Activated T-helper 2 cell treated with anti-CD3 and anti-CD28 coated beads, Interferon-gamma antibody, Interleukin-2, Interleukin-4, amounts not matched to agents 10 μg/mL and 5 μg/mL and 100 μg/mL, durations not matched to agents 14 hours and 24 hours and 36 hours (primary cell): ENCODE measurements at regions of chr5 and their contacts with region 1.

Region 1: DNA sequence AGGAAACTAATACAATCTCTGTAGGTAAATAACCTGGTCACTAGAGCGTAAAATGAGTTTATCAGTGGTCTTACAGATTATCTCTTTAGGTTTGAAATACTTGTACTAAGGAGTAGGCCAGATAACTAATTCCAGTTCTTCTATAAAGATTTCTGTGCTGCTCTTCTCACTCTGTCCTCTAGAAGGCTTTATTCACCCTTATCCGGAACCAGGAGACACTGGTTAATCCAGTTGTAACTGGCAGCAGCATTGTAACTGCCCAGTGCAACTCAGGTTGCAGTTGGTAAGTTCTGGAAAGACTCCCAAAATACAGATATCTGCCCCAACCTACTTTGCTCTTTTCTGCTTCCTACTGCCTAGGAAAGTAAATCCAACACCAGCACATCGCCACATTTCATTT is 19.8 kb downstream of the C5orf22 start:
- DNase-seq: no peak
- H3K4me3 Mint-ChIP-seq: no peak overlapping the region
- H3K27ac Mint-ChIP-seq: no peak overlapping the region
- H3K4me1 Mint-ChIP-seq: peaks cover 14% of the 10 kb centered on the region
- H3K27me3 Mint-ChIP-seq: no peaks in the 10 kb centered on the region

Region 2: DNA sequence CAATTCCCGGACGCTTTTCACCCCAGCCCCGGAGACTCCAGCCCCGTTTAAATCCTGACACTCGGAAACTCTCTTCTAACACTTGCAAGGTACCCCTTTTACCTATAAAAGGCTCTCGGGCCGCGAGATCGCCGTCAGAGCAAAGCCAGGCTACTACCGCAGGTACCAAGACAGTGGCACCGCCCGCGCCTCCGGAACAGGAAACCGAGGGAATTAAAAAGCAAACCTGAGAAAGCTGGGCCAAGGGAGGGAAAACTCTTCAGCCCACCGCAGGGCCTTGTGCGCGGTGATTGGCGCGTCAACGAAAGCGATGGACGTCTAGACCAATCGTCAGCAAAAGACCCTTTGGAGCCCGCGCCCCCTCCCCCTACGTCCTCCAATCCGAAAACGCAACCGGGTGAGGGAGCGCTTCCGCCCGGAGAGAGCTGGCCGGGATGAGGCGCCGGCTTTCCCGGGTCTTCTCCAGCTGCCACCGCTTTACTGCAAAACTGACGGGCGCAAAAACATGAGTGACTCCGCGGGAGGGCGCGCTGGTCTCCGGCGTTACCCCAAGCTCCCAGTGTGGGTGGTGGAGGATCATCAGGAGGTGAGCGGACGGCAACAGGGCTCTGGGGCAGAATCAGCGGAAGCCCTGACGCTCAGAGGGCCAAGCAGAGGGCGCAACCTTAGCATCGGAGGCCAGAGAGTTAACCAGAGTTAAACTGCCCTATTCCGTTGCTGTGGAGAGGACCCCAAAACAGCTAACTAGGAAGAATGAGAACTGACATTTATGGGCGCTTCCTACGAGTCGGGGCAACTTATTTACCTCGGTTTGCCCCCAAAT is 19.8 kb before region 1 on chr5 and contains the starts of genes C5orf22 and DROSHA:
- intact Hi-C with region 1: no loop called
- DNase-seq: peak; percentile 89
- H3K4me3 Mint-ChIP-seq: peak within 1 kb of the TSS; percentile 94
- H3K27ac Mint-ChIP-seq: peak within 1 kb of the TSS; percentile 90
- H3K4me1 Mint-ChIP-seq: peaks cover 38% of the 10 kb centered on the region
- H3K27me3 Mint-ChIP-seq: no peaks in the 10 kb centered on the region
- total RNA-seq, gene C5orf22: 34.3 and 37.6 TPM in 2 replicates
- total RNA-seq, gene DROSHA: 98.1 and 101 TPM in 2 replicates

Region 3: GRCh38 chr5:31561946-31562345 is 10.1 kb after region 1 on chr5:
- intact Hi-C with region 1: loop called (anchors 1 kb)
- DNase-seq: no peak
- H3K4me3 Mint-ChIP-seq: no peak overlapping the region
- H3K27ac Mint-ChIP-seq: no peak overlapping the region
- H3K4me1 Mint-ChIP-seq: peaks cover 8% of the 10 kb centered on the region
- H3K27me3 Mint-ChIP-seq: no peaks in the 10 kb centered on the region

Region 4: GRCh38 chr5:31741496-31741895 is 189.6 kb after region 1 on chr5:
- intact Hi-C with region 1: no loop called
- DNase-seq: no peak
- H3K4me3 Mint-ChIP-seq: no peak overlapping the region
- H3K27ac Mint-ChIP-seq: no peak overlapping the region
- H3K4me1 Mint-ChIP-seq: no peaks in the 10 kb centered on the region
- H3K27me3 Mint-ChIP-seq: no peaks in the 10 kb centered on the region